ENCODE measurements at regions of chr16 and their contacts with region 1.

Region 1: GRCh38 chr16:12067714-12068401 is 91.3 kb downstream of the SNX29 start:
- DNase-seq: peak; percentile 79 to 81
- ATAC-seq: peak; percentile 85 to 93
- H3K4me3 ChIP-seq: no peak overlapping the region
- H3K27ac ChIP-seq: no peak overlapping the region
- H3K4me1 ChIP-seq: no peaks in the 10 kb centered on the region
- CTCF ChIP-seq: peak; percentile 92
- EP300 ChIP-seq: no peak
- POLR2A ChIP-seq: no peak
- RAD21 ChIP-seq: peak; percentile 95 to 97

Region 2: DNA sequence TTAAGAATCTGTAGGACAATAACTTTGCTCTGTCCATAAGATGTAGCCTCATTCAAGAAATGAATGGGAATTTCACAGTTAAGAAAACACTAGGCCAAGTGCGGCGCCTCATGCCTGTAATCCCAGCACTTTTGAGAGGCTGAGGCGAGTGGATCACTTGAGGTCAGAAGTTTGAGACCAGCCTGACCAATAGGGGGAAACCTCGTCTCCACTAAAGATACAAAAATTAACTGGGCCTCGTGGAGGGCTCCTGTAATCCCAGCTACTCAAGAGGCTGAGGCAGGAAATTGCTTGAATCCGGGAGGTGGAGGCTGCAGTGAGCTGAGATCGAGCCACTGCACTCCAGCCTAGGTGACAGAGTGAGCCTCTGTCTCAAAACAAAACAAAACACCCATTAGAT is 196.7 kb before region 1 on chr16:
- CTCF ChIA-PET with region 1: interaction called, 10 read pairs
- POLR2A ChIA-PET with region 1: no interaction called
- DNase-seq: peak in 1 of 2 experiments; percentile 53
- ATAC-seq: peak; percentile 50 to 77; a peak in 3 of 6 replicates
- H3K4me3 ChIP-seq: no peak overlapping the region
- H3K27ac ChIP-seq: no peak overlapping the region
- H3K4me1 ChIP-seq: peaks cover 16% of the 10 kb centered on the region
- CTCF ChIP-seq: 0 out of 3 replicates have a peak, but pooled peaks have one; percentile 16
- EP300 ChIP-seq: no peak
- POLR2A ChIP-seq: no peak
- RAD21 ChIP-seq: no peak

Region 3: DNA sequence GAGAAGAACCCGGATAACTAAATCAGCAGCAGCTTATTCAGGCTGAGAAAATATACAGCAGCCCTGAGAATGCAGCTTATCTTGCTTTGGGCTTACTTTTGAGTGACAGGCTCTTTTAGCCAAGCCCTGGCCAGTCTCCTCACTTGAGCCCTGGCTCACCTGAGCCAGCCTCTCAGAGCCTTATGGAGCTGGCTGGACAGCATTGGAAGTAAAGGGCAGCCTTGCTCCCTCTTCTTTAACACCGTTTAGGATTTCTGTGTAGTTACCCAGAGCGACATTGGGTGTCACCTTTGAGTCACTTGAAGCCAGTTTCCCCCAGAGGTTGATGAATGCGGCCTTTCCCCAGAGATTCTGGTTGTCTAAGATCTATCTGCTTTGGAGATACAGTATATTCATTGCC is 118.3 kb before region 1 on chr16:
- CTCF ChIA-PET with region 1: interaction called, 27 read pairs
- POLR2A ChIA-PET with region 1: no interaction called
- DNase-seq: peak; percentile 55 to 62
- ATAC-seq: peak; percentile 95 to 98
- H3K4me3 ChIP-seq: no peak overlapping the region
- H3K27ac ChIP-seq: no peak overlapping the region
- H3K4me1 ChIP-seq: no peaks in the 10 kb centered on the region
- CTCF ChIP-seq: peak; percentile 60
- EP300 ChIP-seq: no peak
- POLR2A ChIP-seq: no peak
- RAD21 ChIP-seq: peak; percentile 60 to 69

Region 4: GRCh38 chr16:11972128-11972527 is 95.7 kb before region 1 on chr16:
- CTCF ChIA-PET with region 1: interaction called, 61 read pairs
- POLR2A ChIA-PET with region 1: interaction called, 6 read pairs
- DNase-seq: peak in 1 of 2 experiments; percentile 50
- ATAC-seq: peak; percentile 46 to 53; a peak in 3 of 6 replicates
- H3K4me3 ChIP-seq: no peak overlapping the region
- H3K27ac ChIP-seq: no peak overlapping the region
- H3K4me1 ChIP-seq: peaks cover 3% of the 10 kb centered on the region; the same call in 1 of the 3 replicates
- CTCF ChIP-seq: peak; percentile 31; the same call in 2 of the 3 replicates
- EP300 ChIP-seq: no peak
- POLR2A ChIP-seq: no peak
- RAD21 ChIP-seq: peak; percentile 27 to 30; a peak in 3 of 5 replicates

Region 5: DNA sequence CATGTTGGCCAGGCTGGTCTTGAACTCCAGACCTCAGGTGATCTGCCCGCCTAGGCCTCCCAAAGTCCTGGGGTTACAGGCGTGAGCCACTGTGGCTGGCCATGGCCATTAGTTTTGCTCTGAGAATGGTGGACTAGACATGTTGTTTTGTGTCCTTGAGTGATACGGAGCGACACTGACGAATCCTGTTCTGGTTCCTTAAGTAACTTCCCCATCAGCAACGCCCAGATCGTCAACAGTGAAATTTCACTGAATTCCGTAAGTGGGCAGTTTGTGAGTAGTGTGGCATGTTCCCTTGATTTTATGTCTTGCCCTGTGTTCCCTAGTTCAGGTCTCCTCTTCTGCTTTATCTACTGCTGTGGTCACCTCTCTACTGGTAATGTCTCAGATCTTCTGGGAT is 23.9 kb before region 1 on chr16:
- CTCF ChIA-PET with region 1: interaction called, 13 read pairs
- POLR2A ChIA-PET with region 1: no interaction called
- DNase-seq: no peak
- ATAC-seq: no peak
- H3K4me3 ChIP-seq: no peak overlapping the region
- H3K27ac ChIP-seq: no peak overlapping the region
- H3K4me1 ChIP-seq: 0 out of 3 replicates have a peak, but pooled peaks cover under 1% of the 10 kb centered on the region
- CTCF ChIP-seq: no peak
- EP300 ChIP-seq: no peak
- POLR2A ChIP-seq: no peak
- RAD21 ChIP-seq: no peak

Region 6: GRCh38 chr16:12089492-12090150 is 21.8 kb after region 1 on chr16:
- CTCF ChIA-PET with region 1: interaction called, 19 read pairs
- POLR2A ChIA-PET with region 1: no interaction called
- DNase-seq: no peak
- ATAC-seq: peak; percentile 48 to 62; a peak in 3 of 6 replicates
- H3K4me3 ChIP-seq: no peak overlapping the region
- H3K27ac ChIP-seq: no peak overlapping the region
- H3K4me1 ChIP-seq: peaks cover 12% of the 10 kb centered on the region
- CTCF ChIP-seq: no peak
- EP300 ChIP-seq: no peak
- POLR2A ChIP-seq: no peak
- RAD21 ChIP-seq: no peak

Region 7: DNA sequence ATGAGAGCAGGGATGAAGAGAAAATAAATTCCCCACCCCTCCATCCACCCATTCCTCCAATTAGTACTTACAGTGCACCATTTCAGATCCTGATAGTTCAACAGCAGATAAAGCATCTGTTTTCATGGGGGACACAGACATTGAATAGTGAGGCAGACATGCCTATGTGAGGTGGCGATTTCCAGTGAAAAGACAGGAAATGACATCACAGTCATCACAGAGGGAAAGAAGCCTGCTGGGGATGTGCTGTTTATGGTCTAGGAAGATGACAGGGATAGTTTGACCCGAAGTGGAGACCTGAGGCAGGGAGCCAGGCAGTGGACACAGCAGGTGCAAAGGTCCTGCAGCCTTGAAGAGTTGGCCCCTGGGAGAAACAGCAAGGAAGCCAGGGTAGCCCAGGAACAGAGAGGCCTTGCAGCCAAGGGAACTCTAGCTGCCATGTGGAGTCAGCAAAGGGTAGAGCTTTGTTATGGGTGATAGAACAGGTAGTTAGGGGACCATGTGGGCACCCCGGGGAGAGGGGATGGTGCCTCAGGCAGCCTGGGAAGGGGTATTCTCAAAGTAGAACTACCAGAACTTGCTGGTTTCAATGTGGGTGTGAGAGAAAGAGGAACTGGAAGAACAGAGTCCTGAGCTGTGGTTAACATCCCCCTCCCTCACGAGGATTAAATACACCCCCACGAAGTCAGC is 479.2 kb after region 1 on chr16:
- CTCF ChIA-PET with region 1: no interaction called
- POLR2A ChIA-PET with region 1: no interaction called
- DNase-seq: no peak
- ATAC-seq: no peak
- H3K4me3 ChIP-seq: no peak overlapping the region
- H3K27ac ChIP-seq: no peak overlapping the region
- H3K4me1 ChIP-seq: no peaks in the 10 kb centered on the region
- CTCF ChIP-seq: no peak
- EP300 ChIP-seq: no peak
- POLR2A ChIP-seq: no peak
- RAD21 ChIP-seq: no peak

Measured in A549 (cell line).